PC-9 (cell line): ENCODE measurements at regions of chr6 and their contacts with region 1.

Region 1: DNA sequence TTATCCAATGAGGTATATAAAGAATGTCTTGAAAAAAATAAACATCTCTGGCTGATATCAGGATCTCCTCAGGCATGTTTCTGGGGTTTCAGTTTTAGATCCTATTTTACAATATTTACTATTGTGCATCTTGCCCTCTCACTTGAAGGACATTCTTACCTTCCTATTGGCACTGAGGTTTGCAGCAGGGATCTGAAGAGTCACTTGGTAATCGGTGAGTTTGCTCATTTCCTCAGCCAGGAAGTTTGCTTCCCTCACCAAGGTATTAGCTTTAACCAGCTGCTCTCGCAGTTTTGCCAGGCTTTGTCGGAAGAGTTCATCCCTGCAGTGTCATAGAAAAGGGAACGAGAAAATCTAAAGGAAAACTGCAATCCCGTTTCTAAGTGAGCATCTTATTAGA is 101.9 kb upstream of the NUP153 start:
- DNase-seq: no peak
- H3K4me3 ChIP-seq: no peak overlapping the region
- H3K27ac ChIP-seq: no peak overlapping the region
- H3K4me1 ChIP-seq: no peaks in the 10 kb centered on the region
- H3K27me3 ChIP-seq: no peaks in the 10 kb centered on the region
- CTCF ChIP-seq: no peak

Region 2: GRCh38 chr6:17156112-17156921 is 652.3 kb before region 1 on chr6:
- CTCF ChIA-PET with region 1: no interaction called
- POLR2A ChIA-PET with region 1: no interaction called
- intact Hi-C with region 1: loop called (anchors 2 kb)
- DNase-seq: peak; percentile 49 to 56
- H3K4me3 ChIP-seq: no peak overlapping the region
- H3K27ac ChIP-seq: no peak overlapping the region
- H3K4me1 ChIP-seq: no peaks in the 10 kb centered on the region
- H3K27me3 ChIP-seq: no peaks in the 10 kb centered on the region
- CTCF ChIP-seq: peak; percentile 94